Transverse colon (tissue), 4 donors: ENCODE measurements at regions of chr16 and their contacts with region 1.

Region 1: DNA sequence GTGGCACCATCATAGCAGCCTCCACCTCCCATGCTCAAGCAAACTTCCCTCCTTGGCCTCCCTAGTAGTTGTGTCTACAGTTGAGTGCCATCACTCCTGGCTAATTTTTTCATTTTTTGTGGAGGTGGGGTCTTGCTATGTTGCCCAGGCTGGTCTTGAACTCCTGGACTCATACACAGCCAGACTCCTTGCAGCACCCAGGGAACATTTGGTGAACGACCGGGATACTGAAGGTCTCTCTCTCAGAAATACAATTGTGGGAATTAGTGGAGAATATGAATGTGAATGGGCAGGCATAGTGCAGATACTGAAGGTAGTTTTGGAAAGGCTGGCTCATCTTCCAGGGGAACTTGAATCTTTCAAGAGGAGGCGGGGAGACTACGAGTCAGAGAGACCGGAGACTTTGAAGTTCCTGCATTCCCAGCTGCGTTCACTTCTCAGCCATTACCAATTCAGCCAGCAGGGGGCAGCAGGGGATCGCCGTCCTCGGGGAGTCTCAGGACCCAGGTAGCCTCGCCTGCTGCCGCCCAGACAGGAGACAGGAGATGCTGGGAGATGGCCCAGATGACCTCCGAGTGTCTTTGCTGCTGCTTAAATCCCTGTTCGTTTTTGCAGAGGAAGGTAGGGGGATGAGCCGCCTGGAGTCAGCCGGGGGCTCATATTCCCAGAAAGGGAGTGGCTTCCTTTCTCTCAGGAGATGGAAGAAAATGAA is 68.6 kb downstream of the HAPSTR1 start:
- DNase-seq: peak; percentile 63
- H3K4me3 ChIP-seq: no peak overlapping the region
- H3K27ac ChIP-seq: no peak overlapping the region
- H3K4me1 ChIP-seq: no peaks in the 10 kb centered on the region
- H3K27me3 ChIP-seq: peaks cover 4% of the 10 kb centered on the region
- CTCF ChIP-seq: peak; percentile 44 to 81 (median 78)
- EP300 ChIP-seq: no peak
- POLR2A ChIP-seq: no peak

Region 2: DNA sequence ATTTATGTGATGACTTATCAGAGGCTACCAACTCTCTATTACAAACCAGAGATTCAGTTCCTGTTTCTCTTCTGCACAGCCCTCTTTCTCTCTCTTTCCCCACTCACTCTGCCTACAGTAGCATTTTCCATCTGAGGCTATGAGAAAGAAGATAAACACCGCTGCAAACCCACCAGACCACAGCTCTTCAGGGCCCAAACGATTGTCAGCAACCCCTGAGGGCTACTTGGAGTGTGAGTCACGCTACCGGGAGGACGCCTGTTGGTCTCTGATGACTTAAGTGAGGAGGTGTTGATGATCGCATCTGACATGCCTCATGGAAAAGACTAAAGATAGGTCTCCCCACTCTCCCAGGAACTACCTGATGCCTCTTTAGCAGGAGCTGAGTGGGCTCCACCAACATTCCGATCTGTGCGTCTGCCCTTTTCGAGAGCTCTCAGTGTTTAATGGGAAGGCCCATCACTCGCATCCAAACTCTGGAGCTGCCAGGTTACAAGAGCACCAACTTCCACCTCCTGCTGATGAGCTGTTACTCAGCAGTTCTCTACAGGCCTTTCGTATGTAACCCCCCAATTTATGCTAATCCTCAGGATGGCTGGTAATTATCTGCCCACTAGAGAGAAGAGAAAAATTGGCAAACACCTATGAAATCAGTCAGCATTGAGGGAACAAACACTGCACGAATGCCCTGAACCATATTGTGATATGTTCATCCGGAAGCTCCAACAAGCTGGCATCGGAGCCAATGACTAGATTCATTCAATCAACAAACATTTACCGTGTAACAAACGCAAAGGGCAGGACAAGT is 1013.1 kb after region 1 on chr16:
- in situ Hi-C with region 1: loop called in 1 of 4 experiments (anchors 25 kb)
- intact Hi-C with region 1: no loop called
- DNase-seq: no peak
- H3K4me3 ChIP-seq: no peak overlapping the region
- H3K27ac ChIP-seq: no peak overlapping the region
- H3K4me1 ChIP-seq: no peaks in the 10 kb centered on the region
- H3K27me3 ChIP-seq: no peaks in the 10 kb centered on the region
- CTCF ChIP-seq: no peak
- EP300 ChIP-seq: no peak
- POLR2A ChIP-seq: no peak